ENCODE measurements at regions of chr11 and their contacts with region 1.

Region 1: DNA sequence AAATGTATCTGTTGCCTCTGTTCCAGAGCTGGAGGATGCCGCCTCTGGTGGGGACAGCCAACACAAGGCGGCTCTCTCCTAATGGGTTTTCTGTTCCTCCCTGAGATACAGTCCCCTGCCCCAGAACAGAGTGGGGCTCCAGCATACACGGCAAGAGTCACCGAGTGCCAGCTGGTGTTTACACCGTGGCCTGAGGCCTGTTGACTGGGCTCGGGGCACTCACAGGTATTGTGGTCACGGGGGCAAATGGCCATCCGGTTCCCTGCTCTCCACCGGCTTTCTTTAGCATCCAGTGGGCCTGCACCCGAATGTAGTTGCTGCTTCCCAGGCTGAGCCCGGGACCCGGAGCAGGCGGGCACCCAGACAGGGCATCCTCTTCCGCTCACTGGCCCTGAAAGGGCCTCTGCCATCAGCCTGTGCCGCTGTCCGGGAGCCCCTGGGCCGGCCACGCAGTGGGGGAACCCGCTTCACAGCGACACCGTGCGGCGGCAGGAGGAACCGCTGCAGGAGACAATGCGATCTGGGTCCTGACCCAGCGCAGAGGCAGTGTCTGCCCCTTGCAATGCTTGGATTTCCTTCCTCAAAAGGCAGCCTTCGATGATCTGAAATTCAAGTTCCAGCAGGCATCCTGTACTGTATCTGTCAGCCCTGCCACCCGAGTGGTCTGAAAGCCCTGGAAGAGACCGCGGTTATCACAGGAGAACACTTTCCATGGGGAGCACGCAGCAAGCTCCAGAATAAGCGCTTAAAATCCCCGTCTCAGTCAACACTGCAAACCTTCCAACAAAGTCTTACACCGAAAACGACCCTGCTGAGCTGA is 859 bp upstream of the KRTAP5-5 start:
- DNase-seq: peak; percentile 73
- H3K4me3 Mint-ChIP-seq: no peak overlapping the region
- H3K27ac Mint-ChIP-seq: no peak overlapping the region
- H3K4me1 Mint-ChIP-seq: peaks cover 7% of the 10 kb centered on the region
- H3K27me3 Mint-ChIP-seq: peaks cover 27% of the 10 kb centered on the region

Region 2: GRCh38 chr11:1029654-1030053 is 599.1 kb before region 1 on chr11:
- CTCF ChIA-PET with region 1: no interaction called
- POLR2A ChIA-PET with region 1: no interaction called
- intact Hi-C with region 1: no loop called
- DNase-seq: no peak
- H3K4me3 Mint-ChIP-seq: no peak overlapping the region
- H3K27ac Mint-ChIP-seq: no peak overlapping the region
- H3K4me1 Mint-ChIP-seq: no peaks in the 10 kb centered on the region
- H3K27me3 Mint-ChIP-seq: no peaks in the 10 kb centered on the region

Region 3: DNA sequence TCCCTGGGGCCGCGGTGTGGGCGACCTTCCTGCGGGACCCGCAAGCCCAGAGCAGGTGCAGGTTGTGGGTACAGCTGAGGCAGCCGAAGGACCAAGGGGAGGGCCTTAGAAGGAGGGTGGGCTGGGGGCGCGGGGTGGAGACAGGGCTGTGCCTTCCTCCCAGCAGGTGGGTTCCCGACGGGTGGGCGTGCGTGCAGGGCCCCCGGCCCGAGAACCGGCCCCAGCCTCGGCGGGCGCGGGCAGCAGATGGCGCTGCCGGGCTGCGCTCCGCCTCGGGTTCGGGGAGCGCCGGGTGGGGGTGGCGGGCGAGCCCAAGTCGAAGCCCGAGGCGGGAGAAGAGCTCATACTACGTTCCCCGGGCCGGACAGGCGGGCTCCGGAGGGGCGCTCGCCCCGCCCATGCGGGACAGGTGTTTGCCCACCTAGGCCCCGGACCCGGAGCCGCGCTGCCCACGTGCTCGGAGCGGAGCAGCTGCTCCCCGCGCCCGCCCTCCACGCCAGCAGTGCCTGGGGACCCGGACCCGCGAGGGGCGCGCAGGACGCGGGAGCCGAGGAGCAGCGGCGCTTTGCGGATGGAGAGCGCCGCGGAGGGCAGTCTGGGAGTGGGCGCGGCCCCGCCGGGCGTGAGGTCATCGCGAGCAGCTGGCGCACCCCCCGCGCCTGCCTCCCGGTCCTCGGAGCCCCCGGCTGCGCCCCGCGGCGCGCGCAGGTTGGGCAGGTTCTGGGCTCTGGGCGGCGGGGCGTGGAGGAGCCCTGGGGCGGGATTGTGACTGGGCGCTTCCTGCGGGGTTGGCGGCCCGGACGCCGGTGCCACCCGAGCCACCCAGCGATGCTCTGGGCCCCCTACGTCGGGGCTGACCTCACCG is 81.9 kb before region 1 on chr11:
- CTCF ChIA-PET with region 1: interaction called, 25 read pairs
- POLR2A ChIA-PET with region 1: no interaction called
- intact Hi-C with region 1: no loop called
- DNase-seq: peak; percentile 52
- H3K4me3 Mint-ChIP-seq: no peak overlapping the region
- H3K27ac Mint-ChIP-seq: no peak overlapping the region
- H3K4me1 Mint-ChIP-seq: peaks cover 7% of the 10 kb centered on the region
- H3K27me3 Mint-ChIP-seq: peaks cover 22% of the 10 kb centered on the region

Region 4: DNA sequence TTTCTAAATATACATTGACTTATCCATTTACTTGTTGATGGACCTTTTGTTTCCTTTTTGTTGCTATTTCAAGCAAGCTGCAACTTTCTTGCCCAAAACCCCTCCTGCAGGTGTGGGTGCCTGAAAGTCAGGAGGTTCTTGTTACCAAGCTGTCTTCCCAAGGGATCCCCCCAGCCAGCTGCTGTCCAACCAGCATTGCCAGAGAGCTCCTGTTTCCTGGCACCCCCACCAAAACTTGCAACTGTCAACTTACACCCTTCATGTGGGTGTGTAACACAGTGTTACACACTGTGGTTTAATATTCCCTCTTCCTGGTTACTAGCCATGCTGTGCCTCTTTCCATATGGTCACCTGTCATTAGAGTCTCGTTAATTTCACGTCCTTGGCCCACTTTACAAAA is 42.0 kb before region 1 on chr11:
- CTCF ChIA-PET with region 1: interaction called, 5 read pairs
- POLR2A ChIA-PET with region 1: no interaction called
- intact Hi-C with region 1: loop called (anchors 5 kb)
- DNase-seq: no peak
- H3K4me3 Mint-ChIP-seq: no peak overlapping the region
- H3K27ac Mint-ChIP-seq: no peak overlapping the region
- H3K4me1 Mint-ChIP-seq: peaks cover 21% of the 10 kb centered on the region
- H3K27me3 Mint-ChIP-seq: peaks cover 2% of the 10 kb centered on the region

Region 5: DNA sequence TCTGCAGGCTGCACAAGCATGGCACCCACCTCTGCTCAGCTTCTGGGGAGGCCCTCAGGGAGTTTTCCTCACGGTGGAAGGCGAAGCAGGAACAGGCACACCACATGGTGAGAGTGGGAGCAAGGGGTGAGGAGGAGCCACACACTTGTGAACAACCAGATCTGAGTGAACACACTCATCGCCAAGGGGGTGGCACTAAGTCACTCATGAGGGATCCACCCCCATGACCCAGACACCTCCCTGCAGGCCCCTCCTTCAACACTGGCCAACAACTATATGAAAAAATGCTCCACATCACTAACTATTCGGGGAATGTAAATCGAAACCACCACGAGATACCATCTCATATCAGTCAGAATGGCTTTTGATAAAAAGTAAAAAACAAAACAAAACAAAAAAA is 29.9 kb before region 1 on chr11:
- CTCF ChIA-PET with region 1: interaction called, 32 read pairs
- POLR2A ChIA-PET with region 1: no interaction called
- intact Hi-C with region 1: no loop called
- DNase-seq: no peak
- H3K4me3 Mint-ChIP-seq: no peak overlapping the region
- H3K27ac Mint-ChIP-seq: no peak overlapping the region
- H3K4me1 Mint-ChIP-seq: peaks cover 15% of the 10 kb centered on the region
- H3K27me3 Mint-ChIP-seq: peaks cover 23% of the 10 kb centered on the region

Region 6: DNA sequence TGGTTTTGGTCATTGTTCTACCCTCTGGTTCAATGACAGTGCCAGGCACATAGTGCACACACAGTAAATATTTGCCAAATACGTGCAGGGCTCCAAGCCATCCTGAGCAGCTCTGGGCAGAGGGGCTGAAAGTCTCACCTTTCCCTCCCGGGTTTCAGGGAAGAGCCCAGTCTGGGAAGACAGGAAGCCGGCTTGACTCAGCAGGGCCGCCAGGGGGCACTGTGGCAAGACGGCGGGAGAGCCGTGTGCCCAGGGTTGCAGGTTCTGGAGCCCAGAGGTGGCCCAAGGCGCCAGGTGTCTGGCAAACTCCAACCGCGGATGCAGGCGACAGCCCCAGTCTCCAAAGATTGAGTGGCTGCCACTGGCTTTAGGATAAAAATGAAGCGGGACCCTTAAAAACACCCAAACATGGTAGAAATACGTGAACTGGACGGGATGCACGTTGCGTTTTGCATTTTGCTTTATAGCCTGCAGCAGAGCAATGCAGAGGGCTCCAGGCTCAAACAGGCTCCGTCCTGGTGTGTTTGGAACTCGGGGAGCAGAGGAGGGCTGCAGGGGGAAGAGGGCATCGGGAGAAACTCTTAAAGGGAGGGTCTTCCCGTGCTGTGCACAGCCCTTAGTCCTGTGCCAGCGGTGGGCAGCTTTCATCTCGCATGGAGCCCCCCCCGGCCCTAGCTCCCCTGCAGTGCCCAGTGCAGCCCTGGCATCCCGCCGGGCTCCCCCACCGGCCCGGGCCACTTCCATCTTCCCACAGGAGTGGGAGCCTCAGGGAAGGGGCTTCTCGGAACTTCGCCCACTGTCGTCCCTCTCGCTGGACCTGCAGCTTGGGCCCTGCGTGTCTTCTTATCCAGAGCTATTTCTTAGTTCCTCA is 11.6 kb after region 1 on chr11:
- CTCF ChIA-PET with region 1: interaction called, 16 read pairs
- POLR2A ChIA-PET with region 1: no interaction called
- intact Hi-C with region 1: no loop called
- DNase-seq: peak; percentile 33
- H3K4me3 Mint-ChIP-seq: no peak overlapping the region
- H3K27ac Mint-ChIP-seq: no peak overlapping the region
- H3K4me1 Mint-ChIP-seq: no peaks in the 10 kb centered on the region
- H3K27me3 Mint-ChIP-seq: peaks cover 10% of the 10 kb centered on the region

Region 7: GRCh38 chr11:1714973-1715885 is 86.5 kb after region 1 on chr11:
- CTCF ChIA-PET with region 1: no interaction called
- POLR2A ChIA-PET with region 1: no interaction called
- intact Hi-C with region 1: no loop called
- DNase-seq: no peak
- H3K4me3 Mint-ChIP-seq: no peak overlapping the region
- H3K27ac Mint-ChIP-seq: no peak overlapping the region
- H3K4me1 Mint-ChIP-seq: no peaks in the 10 kb centered on the region
- H3K27me3 Mint-ChIP-seq: peaks cover 4% of the 10 kb centered on the region